Right ventricle myocardium inferior (tissue), 1 donor: ENCODE measurements at regions of chr5 and their contacts with region 1.

Region 1: DNA sequence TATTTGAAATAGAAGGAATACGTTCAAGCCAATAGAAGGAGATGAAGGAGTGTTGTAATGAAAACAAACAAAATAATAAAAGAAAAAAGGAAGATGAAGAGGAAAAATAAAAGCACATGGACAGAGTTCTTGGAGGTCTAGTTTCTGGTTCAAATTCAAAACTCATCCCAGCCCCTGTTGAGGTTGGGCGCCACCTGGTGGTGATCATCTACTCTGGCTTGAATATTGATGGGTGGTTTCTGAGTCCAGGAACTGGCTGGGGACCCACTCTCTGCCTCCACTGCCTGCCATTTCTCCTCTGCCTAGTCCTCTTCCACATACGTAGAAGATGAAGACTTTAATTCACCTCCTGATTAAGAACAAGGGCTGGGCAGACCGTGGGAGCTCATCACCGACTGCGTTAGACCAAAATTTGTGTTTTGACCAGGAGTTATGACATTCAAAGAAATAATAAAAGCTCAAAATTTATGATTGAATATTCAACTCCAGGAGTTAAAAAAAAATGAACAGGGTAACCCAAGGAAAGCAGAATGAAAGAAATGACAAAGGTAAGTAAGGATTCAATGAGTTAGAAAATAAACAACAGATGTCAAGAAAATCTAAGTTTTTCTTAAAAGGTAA is 99.0 kb upstream of the SLC1A3 start:
- DNase-seq: peak; percentile 83
- ATAC-seq: peak; percentile 60

Region 2: GRCh38 chr5:36414869-36415282 is 92.6 kb before region 1 on chr5:
- intact Hi-C with region 1: loop called (anchors 2 kb)
- DNase-seq: no peak
- ATAC-seq: peak; percentile 57

Region 3: GRCh38 chr5:36662291-36662851 is 154.9 kb after region 1 on chr5:
- intact Hi-C with region 1: no loop called
- DNase-seq: no peak
- ATAC-seq: no peak